Caco-2 (cell line): ENCODE measurements at regions of chr7 and their contacts with region 1.

Region 1: GRCh38 chr7:111741811-111742240 is 179.5 kb upstream of the IMMP2L start:
- DNase-seq: peak; percentile 65 to 67
- H3K4me3 ChIP-seq: no peak overlapping the region
- H3K4me3 Mint-ChIP-seq: no peak overlapping the region
- H3K27ac Mint-ChIP-seq: no peak overlapping the region
- H3K4me1 ChIP-seq: peaks cover 6% of the 10 kb centered on the region; the same call in 1 of the 2 replicates
- H3K4me1 Mint-ChIP-seq: peaks cover 8% of the 10 kb centered on the region
- H3K27me3 ChIP-seq: no peaks in the 10 kb centered on the region
- H3K27me3 Mint-ChIP-seq: no peaks in the 10 kb centered on the region
- CTCF ChIP-seq: peak; percentile 69 to 70

Region 2: GRCh38 chr7:111763221-111763801 is 21.5 kb after region 1 on chr7:
- CTCF ChIA-PET with region 1: interaction called, 3 read pairs
- POLR2A ChIA-PET with region 1: no interaction called
- intact Hi-C with region 1: loop called (anchors 1 kb)
- DNase-seq: peak in 1 of 2 experiments; percentile 32
- H3K4me3 ChIP-seq: no peak overlapping the region
- H3K4me3 Mint-ChIP-seq: no peak overlapping the region
- H3K27ac Mint-ChIP-seq: no peak overlapping the region
- H3K4me1 ChIP-seq: peaks cover under 1% of the 10 kb centered on the region; the same call in 1 of the 2 replicates
- H3K4me1 Mint-ChIP-seq: no peaks in the 10 kb centered on the region
- H3K27me3 ChIP-seq: no peaks in the 10 kb centered on the region
- H3K27me3 Mint-ChIP-seq: no peaks in the 10 kb centered on the region
- CTCF ChIP-seq: peak; percentile 57 to 72